Naive thymus-derived CD8-positive, alpha-beta T cell (primary cell): ENCODE measurements at regions of chr11 and their contacts with region 1.

Region 1: GRCh38 chr11:2982214-2982613 is 9.9 kb downstream of the NAP1L4 start:
- DNase-seq: no peak
- ATAC-seq: no peak
- H3K4me3 Mint-ChIP-seq: peak overlapping the region in 8 of 10 donors; percentile 31 to 79 (median 74)
- H3K27ac Mint-ChIP-seq: peak overlapping the region; percentile 30 to 88 (median 78)
- H3K4me1 Mint-ChIP-seq: peaks cover 24 to 84% (median 67%) of the 10 kb centered on the region in 4 donors
- H3K27me3 Mint-ChIP-seq: no peaks in the 10 kb centered on the region

Region 2: DNA sequence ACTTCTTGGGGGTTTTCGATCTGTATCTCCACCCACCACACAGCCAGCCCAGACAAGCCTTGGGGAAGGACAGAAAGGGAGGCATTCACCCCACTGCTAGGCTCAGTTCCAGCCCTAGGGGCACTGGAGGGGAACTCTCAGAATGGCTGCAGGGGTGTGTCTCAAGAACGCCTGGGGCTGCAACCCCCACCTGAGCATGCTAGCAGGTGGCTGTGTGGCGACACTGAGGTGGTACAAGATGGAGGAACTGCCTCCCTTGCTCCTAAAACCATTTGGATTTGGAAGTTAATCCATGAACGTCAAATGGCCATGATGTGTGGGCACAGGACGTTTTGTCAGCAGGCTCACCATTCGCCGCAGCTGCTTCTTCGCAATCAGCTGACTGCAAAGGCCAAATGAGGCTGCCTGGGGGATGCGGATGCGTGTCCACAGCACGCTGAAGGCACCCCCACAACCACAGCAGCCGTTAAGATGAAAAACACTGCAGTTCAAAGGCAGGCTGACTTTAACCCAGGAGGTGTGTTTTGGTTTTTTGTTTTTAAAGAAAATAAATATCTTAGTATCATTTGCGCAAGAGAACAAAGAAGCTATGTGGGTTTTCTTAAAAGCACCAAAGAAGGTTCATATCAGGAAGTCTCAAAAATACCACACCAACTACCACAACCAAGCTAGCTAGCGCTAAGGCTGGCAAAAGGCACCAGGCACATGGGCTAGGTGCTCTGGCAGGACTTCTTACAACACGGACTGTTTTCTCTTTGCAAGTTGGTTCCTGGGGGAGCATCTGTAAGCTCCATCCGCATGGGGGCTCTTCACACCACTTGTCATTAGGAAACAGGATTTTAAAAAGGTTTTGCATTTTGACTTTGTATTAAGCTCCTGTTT is 32.1 kb after region 1 on chr11:
- POLR2A ChIA-PET with region 1: interaction called, 457 read pairs
- DNase-seq: peak; percentile 65 to 97 (median 90)
- ATAC-seq: peak; percentile 84 to 90
- H3K4me3 Mint-ChIP-seq: peak overlapping the region; percentile 55 to 80 (median 68)
- H3K27ac Mint-ChIP-seq: peak overlapping the region; percentile 82 to 98 (median 95)
- H3K4me1 Mint-ChIP-seq: peaks cover 19 to 92% (median 70%) of the 10 kb centered on the region in 4 donors
- H3K27me3 Mint-ChIP-seq: no peaks in the 10 kb centered on the region